H1 (cell line): ENCODE measurements at regions of chr3 and their contacts with region 1.

Region 1: DNA sequence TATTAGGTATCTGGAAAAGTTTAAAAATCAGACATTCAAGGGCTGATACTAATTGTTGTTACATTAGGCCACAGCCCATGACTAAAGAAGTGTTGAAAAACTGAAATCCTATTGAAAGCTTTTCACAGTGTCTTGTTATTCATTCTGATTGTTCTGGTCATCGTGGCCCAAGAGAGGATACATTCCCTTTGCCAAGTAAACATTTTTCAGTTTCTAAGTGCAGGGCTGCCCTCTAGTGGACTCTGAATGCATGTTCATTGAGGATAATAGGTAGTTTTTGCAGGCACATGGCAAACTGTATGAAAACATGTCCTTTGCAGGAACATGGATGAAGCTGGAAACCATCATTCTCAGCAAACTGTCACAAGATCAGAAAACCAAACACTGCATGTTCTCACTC is 181.1 kb downstream of the MYRIP start:
- DNase-seq: peak in 1 of 2 experiments; percentile 55
- H3K4me3 ChIP-seq: no peak overlapping the region
- H3K27ac ChIP-seq: no peak overlapping the region
- H3K4me1 ChIP-seq: no peaks in the 10 kb centered on the region
- H3K27me3 ChIP-seq: no peaks in the 10 kb centered on the region
- CTCF ChIP-seq: peak in 2 of 3 experiments; percentile 68 to 77; a peak in 3 of 4 replicates
- EP300 ChIP-seq: no peak
- POLR2A ChIP-seq: no peak
- RAD21 ChIP-seq: peak; percentile 90 to 91

Region 2: GRCh38 chr3:40008796-40009195 is 18.3 kb after region 1 on chr3:
- CTCF ChIA-PET with region 1: interaction called, 11 read pairs
- POLR2A ChIA-PET with region 1: no interaction called
- DNase-seq: no peak
- H3K4me3 ChIP-seq: no peak overlapping the region
- H3K27ac ChIP-seq: no peak overlapping the region
- H3K4me1 ChIP-seq: no peaks in the 10 kb centered on the region
- H3K27me3 ChIP-seq: no peaks in the 10 kb centered on the region
- CTCF ChIP-seq: no peak
- EP300 ChIP-seq: no peak
- POLR2A ChIP-seq: no peak
- RAD21 ChIP-seq: no peak